Activated CD4-positive, alpha-beta memory T cell treated with anti-CD3 and anti-CD28 coated beads for 36 hours (primary cell): ENCODE measurements at regions of chr22 and their contacts with region 1.

Region 1: DNA sequence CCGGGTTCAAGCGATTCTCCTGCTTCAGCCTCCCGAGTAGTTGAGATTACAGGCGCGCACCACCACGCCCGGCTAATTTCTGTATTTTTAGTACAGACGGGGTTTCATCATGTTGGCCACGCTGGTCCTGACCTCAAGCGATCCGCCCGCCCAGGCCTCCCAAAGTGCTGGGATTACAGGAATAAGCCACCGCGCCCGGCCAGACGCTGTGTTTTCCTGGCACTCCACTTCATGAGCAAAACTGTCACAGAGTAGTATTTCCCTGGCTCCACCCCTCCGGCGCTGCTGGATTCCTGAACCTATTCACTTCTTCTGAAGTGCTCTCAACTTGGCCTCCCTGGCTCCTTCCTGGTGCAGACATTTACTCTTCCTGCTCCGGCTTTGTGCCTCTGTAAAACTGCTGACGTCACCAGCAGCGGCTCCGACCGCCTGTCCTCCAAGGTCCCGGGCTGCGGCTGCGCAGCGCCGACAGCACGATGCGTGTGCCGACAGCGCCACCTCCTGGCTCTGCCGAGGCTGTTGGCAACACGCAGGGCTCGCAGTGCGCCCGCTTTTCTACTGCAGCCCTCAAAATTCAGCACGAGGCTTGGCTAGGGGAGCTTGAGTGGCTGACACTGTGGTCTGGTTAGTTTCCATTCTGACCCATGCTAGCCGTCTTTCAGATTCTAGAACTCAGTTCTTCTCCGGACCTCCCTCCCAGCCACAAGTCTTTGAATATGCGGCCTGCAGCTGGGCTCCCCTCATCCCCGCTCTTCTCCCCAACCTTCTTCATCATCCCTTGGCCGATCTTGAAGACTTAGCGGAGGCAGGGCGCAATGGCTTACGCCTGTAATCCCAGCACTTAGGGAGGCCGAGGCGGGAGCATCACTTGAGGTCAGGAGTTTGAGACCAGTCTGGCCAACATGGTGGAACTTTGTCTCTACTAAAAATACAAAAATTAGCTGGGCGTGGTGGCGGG is 36.6 kb downstream of the APOL3 start:
- DNase-seq: peak; percentile 95
- H3K4me3 Mint-ChIP-seq: peak overlapping the region; percentile 66
- H3K27ac Mint-ChIP-seq: peak overlapping the region; percentile 67
- H3K4me1 Mint-ChIP-seq: peaks cover 12% of the 10 kb centered on the region
- H3K27me3 Mint-ChIP-seq: no peaks in the 10 kb centered on the region

Region 2: DNA sequence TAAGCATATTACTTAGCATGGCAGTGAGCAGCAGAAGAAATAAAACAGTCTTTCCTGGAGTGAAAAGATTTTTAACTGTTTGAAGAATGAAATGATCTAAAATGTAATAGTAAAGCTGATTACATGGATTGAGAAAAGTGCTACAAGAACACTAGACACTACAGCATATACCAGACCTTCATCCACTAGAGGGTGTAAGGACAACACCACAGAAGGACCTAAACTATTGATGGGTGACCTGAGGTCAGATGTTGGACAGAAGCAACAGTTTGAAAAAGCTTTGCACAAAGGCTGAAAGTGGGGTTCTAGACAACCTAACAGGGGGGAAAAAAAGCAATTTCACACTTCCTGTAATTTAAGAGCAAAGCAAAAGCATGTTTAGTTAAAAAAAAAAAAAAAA is 193.0 kb before region 1 on chr22:
- CTCF ChIA-PET with region 1: interaction called, 6 read pairs
- POLR2A ChIA-PET with region 1: no interaction called
- intact Hi-C with region 1: loop called (anchors 2 kb)
- DNase-seq: no peak
- H3K4me3 Mint-ChIP-seq: no peak overlapping the region
- H3K27ac Mint-ChIP-seq: no peak overlapping the region
- H3K4me1 Mint-ChIP-seq: no peaks in the 10 kb centered on the region
- H3K27me3 Mint-ChIP-seq: peaks cover 5% of the 10 kb centered on the region

Region 3: GRCh38 chr22:36144886-36145541 is 21.1 kb after region 1 on chr22:
- CTCF ChIA-PET with region 1: interaction called, 10 read pairs
- POLR2A ChIA-PET with region 1: no interaction called
- intact Hi-C with region 1: no loop called
- DNase-seq: peak; percentile 55
- H3K4me3 Mint-ChIP-seq: no peak overlapping the region
- H3K27ac Mint-ChIP-seq: peak overlapping the region; percentile 36
- H3K4me1 Mint-ChIP-seq: peaks cover 17% of the 10 kb centered on the region
- H3K27me3 Mint-ChIP-seq: no peaks in the 10 kb centered on the region

Region 4: GRCh38 chr22:36180038-36180880 is 56.3 kb after region 1 on chr22:
- CTCF ChIA-PET with region 1: interaction called, 13 read pairs
- POLR2A ChIA-PET with region 1: no interaction called
- intact Hi-C with region 1: no loop called
- DNase-seq: peak; percentile 89
- H3K4me3 Mint-ChIP-seq: no peak overlapping the region
- H3K27ac Mint-ChIP-seq: no peak overlapping the region
- H3K4me1 Mint-ChIP-seq: peaks cover 6% of the 10 kb centered on the region
- H3K27me3 Mint-ChIP-seq: no peaks in the 10 kb centered on the region

Region 5: DNA sequence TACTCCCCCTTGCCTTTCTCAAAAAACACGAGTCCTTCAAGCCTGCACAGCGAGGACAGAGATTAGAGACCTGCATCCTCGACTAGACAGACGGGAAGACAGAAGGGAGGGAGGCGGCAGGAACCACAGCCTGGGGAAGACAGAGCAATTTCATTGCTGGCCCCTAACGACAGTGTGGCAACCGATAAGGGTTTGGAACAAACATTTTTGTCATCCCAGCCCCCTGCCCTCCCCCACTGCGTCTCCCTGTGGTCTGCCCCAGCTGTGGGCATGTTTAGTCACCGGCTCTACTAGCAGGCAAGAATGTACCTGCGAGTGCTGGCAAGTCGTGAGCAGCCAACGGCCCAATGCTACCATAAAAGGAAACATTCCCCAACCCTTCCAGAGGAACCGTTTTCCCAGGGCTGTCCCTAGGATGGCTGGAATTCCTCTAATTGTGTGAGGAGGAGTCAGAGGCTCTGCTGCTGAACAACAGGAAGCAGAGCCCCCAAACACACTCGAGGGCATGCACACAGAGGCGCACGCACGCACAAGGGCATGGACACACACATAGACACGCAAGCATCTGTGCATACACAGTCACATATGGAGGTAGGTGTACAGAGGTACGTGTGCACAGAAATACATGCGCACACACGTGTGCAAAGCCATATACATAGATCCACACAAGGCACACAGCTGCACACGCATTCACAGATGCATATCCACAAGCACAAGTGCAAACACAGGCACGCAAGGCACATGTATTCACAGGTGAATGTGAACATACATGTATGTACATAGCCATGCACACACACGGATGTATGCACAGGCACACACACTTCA is 205.5 kb after region 1 on chr22:
- CTCF ChIA-PET with region 1: no interaction called
- POLR2A ChIA-PET with region 1: no interaction called
- intact Hi-C with region 1: no loop called
- DNase-seq: peak; percentile 92
- H3K4me3 Mint-ChIP-seq: peak overlapping the region; percentile 75
- H3K27ac Mint-ChIP-seq: peak overlapping the region; percentile 99
- H3K4me1 Mint-ChIP-seq: peaks cover 75% of the 10 kb centered on the region
- H3K27me3 Mint-ChIP-seq: no peaks in the 10 kb centered on the region